ENCODE measurements at regions of chr18 and their contacts with region 1.

Region 1: DNA sequence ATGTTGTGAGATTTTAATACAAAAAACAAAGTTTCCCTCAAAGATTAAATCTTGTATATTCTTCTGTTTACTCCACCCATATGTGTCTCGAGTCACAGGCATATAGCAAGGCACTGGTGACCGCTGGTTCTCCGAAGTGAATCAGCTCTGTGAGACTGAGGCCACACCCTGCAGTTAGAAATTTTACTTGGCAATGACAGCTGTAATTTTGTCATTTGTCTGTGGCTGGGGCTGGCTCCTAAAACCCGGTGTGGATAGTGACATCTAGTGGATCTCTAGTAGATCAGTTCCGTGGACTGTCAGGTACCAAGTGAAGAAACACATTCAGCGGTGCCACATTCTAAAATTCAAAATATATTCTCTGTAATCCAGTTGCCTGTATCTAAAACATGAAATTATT is 278.0 kb downstream of the NEDD4L start:
- DNase-seq: peak; percentile 58 to 80
- ATAC-seq: peak; percentile 85

Region 2: DNA sequence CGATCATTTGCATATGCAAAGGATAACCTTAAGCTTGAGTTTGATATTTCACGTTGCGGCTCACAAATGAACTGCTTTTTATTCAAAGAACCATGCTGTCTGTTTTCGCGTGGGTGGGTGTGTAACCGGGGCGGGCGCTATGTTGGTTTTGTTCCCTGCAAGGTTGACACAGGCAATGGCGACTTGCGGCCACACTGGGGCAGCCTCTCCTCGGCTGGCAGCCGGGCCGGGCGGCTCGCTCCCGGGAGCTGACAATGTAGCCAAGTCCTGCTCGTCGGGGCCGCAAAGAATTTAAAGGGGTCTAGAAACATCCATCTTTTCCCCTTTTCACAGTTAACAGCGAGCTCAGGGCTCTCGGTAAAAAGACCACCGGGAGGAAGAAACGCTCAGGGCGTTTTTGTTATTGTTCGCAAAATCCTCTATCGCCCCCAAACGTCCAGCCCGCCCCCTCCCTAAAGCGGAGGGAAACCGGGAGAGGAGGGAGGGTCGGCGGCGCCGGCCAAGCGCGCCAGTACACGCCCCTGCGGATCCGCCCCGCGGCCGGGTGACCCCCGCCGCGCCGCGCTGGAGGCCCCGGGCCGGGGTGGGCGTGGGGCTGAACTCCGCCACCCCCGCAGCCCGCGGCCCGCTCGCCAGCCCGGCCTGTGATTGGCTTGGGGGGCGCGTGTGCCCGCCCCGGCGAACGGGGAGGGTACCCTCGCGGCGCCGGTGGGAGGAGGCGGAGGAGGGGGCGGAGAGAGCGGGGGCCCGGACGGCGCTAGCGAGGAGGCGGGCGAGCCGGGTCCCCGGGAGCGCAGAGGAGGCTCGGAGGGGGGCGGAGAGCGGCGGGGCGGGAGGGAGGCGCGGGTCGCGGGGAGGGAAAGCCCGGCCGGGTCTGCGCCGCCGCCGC is 278.3 kb before region 1 on chr18 and contains the start of gene NEDD4L:
- intact Hi-C with region 1: loop called in 1 of 2 experiments (anchors 10 kb)
- DNase-seq: peak; percentile 88 to 89
- ATAC-seq: peak; percentile 73
- total RNA-seq, gene NEDD4L: 176 to 332 TPM

Region 3: DNA sequence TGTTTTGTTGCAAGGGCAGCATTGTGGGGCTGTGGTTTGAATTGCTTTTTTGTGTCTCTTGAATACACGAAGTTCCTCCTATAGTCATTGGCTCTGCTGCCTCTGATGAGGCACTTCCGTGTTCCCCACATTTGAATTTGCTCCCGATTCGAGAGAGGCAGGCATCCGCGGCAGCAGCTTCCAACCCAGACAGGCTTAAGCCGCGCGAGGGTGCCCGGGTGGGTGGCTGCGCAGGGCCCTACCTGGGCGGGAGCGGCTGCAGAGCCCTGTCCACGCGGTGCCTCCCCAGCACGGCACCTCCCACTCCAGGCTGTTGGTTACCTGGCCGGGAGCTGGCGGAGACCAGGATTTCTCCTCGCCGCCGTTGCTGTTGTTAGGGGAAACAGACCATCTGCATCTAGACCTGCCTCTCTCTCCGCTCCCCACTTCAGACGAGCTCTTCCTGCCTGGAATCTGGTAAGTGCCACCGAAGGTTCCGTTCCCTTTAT is 126.7 kb before region 1 on chr18:
- intact Hi-C with region 1: loop called in 1 of 2 experiments (anchors 10 kb)
- DNase-seq: peak; percentile 55 to 62
- ATAC-seq: peak; percentile 78

Measured in left colon (tissue), 2 donors.